ENCODE measurements at regions of chr15 and their contacts with region 1.

Region 1: GRCh38 chr15:69160141-69160993 is at the start of gene GLCE:
- DNase-seq: peak; percentile 99
- H3K4me3 ChIP-seq: peak within 1 kb of the TSS; percentile 86 to 90 (median 88)
- H3K27ac ChIP-seq: peak within 1 kb of the TSS; percentile 84
- H3K4me1 ChIP-seq: peaks cover 10% of the 10 kb centered on the region
- H3K27me3 ChIP-seq: no peaks in the 10 kb centered on the region
- CTCF ChIP-seq: no peak
- total RNA-seq, gene GLCE: 10.0 to 18.7 TPM

Region 2: GRCh38 chr15:69014454-69014853 is 145.9 kb before region 1 on chr15 and contains the start of gene NOX5:
- CTCF ChIA-PET with region 1: interaction called, 10 read pairs
- dilution Hi-C with region 1: no loop called
- in situ Hi-C with region 1: no loop called
- intact Hi-C with region 1: no loop called
- DNase-seq: peak; percentile 67
- H3K4me3 ChIP-seq: no peak within 1 kb of the TSS
- H3K27ac ChIP-seq: no peak within 1 kb of the TSS
- H3K4me1 ChIP-seq: no peaks in the 10 kb centered on the region
- H3K27me3 ChIP-seq: no peaks in the 10 kb centered on the region
- CTCF ChIP-seq: no peak
- total RNA-seq, gene NOX5: 0.05 to 0.50 TPM

Region 3: GRCh38 chr15:69081310-69082004 is 78.9 kb before region 1 on chr15:
- CTCF ChIA-PET with region 1: no interaction called
- dilution Hi-C with region 1: no loop called
- in situ Hi-C with region 1: no loop called
- intact Hi-C with region 1: loop called (anchors 2 kb)
- DNase-seq: peak; percentile 4
- H3K4me3 ChIP-seq: no peak overlapping the region
- H3K27ac ChIP-seq: no peak overlapping the region
- H3K4me1 ChIP-seq: peaks cover 19% of the 10 kb centered on the region
- H3K27me3 ChIP-seq: no peaks in the 10 kb centered on the region
- CTCF ChIP-seq: no peak

Region 4: DNA sequence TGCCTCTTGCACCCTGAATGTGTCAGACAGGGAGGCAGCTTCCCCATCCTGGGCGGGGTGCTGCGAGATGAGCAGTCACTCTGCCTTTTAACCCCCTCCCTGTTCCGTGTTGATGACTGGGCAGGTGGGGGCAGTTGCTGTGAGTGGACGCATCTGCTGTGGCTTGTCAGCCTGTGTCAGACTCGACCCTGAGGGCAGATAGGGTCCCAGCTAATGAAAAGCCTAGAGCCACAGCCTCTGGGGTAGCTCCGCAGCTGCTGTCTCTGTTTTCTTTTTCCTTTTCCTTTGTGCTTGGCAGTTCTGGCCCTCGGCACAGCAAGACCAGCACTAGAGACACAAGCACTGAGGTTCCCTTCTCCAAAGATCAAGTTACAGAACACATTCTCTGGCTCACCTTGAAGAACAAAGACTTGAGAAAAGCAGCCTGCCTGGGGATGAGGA is 42.9 kb before region 1 on chr15:
- CTCF ChIA-PET with region 1: no interaction called
- dilution Hi-C with region 1: no loop called
- in situ Hi-C with region 1: no loop called
- intact Hi-C with region 1: no loop called
- DNase-seq: peak; percentile 70
- H3K4me3 ChIP-seq: peak overlapping the region in 2 of 3 experiments; percentile 8 to 15
- H3K27ac ChIP-seq: no peak overlapping the region
- H3K4me1 ChIP-seq: peaks cover 13% of the 10 kb centered on the region
- H3K27me3 ChIP-seq: no peaks in the 10 kb centered on the region
- CTCF ChIP-seq: no peak

Region 5: DNA sequence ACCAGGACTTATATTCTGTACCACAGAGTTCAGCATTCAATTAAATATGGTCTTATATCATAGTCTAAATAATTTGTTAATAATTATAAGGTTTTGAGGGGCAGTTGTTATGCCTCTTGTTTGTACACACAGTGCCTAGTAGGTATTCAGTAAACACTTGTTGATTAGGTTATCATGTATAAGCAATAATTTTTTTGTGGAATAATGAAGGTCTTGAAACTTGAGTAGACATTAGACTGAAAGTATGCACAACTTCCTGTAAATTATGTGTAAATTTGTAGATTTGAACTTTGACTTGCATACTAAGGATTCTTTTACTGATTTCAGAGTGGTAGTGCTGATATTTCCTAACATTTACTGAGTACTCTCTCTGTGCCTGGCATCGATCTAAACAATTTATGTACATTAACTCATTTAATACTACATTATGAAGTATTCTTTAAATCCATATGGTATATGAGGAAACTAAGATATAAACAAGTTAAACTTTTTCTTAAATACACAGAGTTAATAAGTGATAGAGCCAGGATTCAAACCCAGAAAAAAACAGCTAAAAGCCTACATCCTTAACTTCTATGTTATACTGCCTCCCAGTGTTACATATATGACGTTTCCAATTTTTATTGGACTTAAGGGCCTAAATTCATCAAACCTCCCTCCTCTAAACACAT is 65.1 kb after region 1 on chr15:
- CTCF ChIA-PET with region 1: no interaction called
- dilution Hi-C with region 1: no loop called
- in situ Hi-C with region 1: no loop called
- intact Hi-C with region 1: loop called (anchors 1 kb)
- DNase-seq: peak; percentile 14
- H3K4me3 ChIP-seq: no peak overlapping the region
- H3K27ac ChIP-seq: no peak overlapping the region
- H3K4me1 ChIP-seq: peaks cover 6% of the 10 kb centered on the region
- H3K27me3 ChIP-seq: no peaks in the 10 kb centered on the region
- CTCF ChIP-seq: peak; percentile 16 to 42

Region 6: DNA sequence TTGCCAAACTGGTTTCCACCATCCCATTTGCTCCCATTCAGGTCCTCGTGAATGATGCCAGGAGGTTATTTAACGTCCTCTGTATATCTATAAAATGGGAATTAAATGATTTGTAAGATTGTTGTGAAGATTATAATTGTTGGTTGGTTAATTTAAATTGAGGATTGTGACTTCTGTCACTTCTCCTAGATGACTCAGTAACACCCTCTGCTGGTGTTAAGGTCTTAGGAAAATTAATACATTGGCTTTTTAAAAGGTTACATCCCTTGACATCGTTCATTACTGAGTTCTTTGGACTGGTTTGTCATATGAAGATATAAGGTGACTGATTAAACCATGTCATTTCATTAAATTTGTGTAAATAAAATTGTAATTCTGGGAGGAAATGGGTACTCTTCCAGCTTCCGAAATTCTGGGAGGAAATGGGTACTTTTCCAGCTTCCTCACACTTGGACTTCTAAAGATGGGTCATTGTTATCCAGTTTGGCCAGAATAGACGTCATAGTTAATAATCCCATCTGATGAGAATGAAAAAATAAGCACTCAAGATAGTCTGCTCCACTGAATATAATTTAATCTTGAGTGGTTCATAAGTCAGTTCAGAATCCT is 105.1 kb after region 1 on chr15:
- CTCF ChIA-PET with region 1: no interaction called
- dilution Hi-C with region 1: no loop called
- in situ Hi-C with region 1: no loop called
- intact Hi-C with region 1: loop called (anchors 1 kb)
- DNase-seq: peak; percentile 23
- H3K4me3 ChIP-seq: no peak overlapping the region
- H3K27ac ChIP-seq: no peak overlapping the region
- H3K4me1 ChIP-seq: no peaks in the 10 kb centered on the region
- H3K27me3 ChIP-seq: no peaks in the 10 kb centered on the region
- CTCF ChIP-seq: peak; percentile 33 to 61

Region 7: GRCh38 chr15:69394556-69395282 is 234.4 kb after region 1 on chr15:
- CTCF ChIA-PET with region 1: no interaction called
- dilution Hi-C with region 1: no loop called
- in situ Hi-C with region 1: no loop called
- intact Hi-C with region 1: loop called (anchors 5 kb)
- DNase-seq: peak; percentile 42
- H3K4me3 ChIP-seq: no peak overlapping the region
- H3K27ac ChIP-seq: peak overlapping the region; percentile 42
- H3K4me1 ChIP-seq: peaks cover 47% of the 10 kb centered on the region
- H3K27me3 ChIP-seq: no peaks in the 10 kb centered on the region
- CTCF ChIP-seq: peak; percentile 84 to 91

Measured in mammary epithelial cell (primary cell).